GM12878 (cell line): ENCODE measurements at regions of chr2 and their contacts with region 1.

Region 1: DNA sequence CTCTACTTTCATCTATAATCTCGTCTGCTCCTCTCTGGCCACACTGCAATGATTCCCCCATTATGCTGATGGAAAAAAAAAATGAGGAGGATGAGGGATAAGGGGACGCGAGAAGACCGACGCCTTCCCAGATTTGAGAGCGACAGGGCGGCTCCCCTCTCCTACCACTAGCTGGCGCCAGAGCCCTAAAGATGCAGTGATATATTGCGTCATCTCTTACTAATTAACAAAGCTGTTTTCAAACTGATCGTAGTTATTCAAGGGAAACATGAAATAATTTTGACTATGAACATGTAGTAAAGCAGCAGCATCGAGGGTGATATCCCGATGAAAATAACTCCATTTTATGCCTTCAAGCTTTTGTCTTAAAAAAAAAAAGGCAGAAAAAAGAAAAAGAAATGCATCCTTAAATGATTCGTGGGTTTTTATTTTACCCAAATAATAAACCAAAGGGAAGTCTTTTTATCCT is 48.0 kb upstream of the HNRNPA3 start:
- DNase-seq: peak; percentile 56
- ATAC-seq: peak; percentile 64
- H3K4me3 ChIP-seq: peak overlapping the region; percentile 63
- H3K27ac ChIP-seq: peak overlapping the region; percentile 97
- H3K4me1 ChIP-seq: peaks cover 16% of the 10 kb centered on the region
- H3K27me3 ChIP-seq: no peaks in the 10 kb centered on the region
- CTCF ChIP-seq: peak; percentile 100; a peak in 5 of 6 replicates
- EP300 ChIP-seq: no peak; a peak in 1 of 4 replicates
- POLR2A ChIP-seq: no peak
- RAD21 ChIP-seq: peak; percentile 99

Region 2: DNA sequence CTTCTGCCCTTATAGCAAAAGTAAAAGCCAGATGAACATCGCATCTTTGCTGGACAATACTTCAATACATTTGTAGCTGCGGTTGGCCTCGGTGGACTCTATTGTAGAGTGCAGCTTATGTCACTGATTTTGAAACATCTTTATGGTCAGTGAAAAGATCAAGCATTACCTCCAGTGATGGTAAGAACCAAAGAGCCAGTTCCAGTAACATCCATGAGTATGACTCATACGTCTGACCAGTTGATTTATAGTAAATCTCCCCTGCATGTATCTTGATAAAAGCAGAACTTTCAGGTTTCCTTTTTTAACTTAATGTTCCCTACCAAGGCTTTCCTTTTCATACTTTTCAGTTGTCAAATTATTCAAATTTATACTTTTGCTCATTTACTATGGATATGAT is 71.2 kb before region 1 on chr2:
- CTCF ChIA-PET with region 1: no interaction called
- POLR2A ChIA-PET with region 1: no interaction called
- RAD21 ChIA-PET with region 1: no interaction called
- SMC1A ChIA-PET with region 1: no interaction called
- in situ Hi-C with region 1: no loop called
- intact Hi-C with region 1: no loop called
- DNase-seq: no peak
- ATAC-seq: no peak
- H3K4me3 ChIP-seq: no peak overlapping the region
- H3K27ac ChIP-seq: no peak overlapping the region
- H3K4me1 ChIP-seq: no peaks in the 10 kb centered on the region
- H3K27me3 ChIP-seq: no peaks in the 10 kb centered on the region
- CTCF ChIP-seq: no peak
- EP300 ChIP-seq: no peak
- POLR2A ChIP-seq: no peak
- RAD21 ChIP-seq: no peak

Region 3: GRCh38 chr2:177188482-177189469 is 24.2 kb after region 1 on chr2:
- CTCF ChIA-PET with region 1: interaction called, 128 read pairs
- POLR2A ChIA-PET with region 1: interaction called, 6 read pairs
- RAD21 ChIA-PET with region 1: interaction called, 65 read pairs
- SMC1A ChIA-PET with region 1: interaction called, 82 read pairs
- in situ Hi-C with region 1: no loop called
- intact Hi-C with region 1: no loop called
- DNase-seq: no peak
- ATAC-seq: peak; percentile 27; the same call in 1 of the 3 replicates
- H3K4me3 ChIP-seq: no peak overlapping the region
- H3K27ac ChIP-seq: no peak overlapping the region
- H3K4me1 ChIP-seq: peaks cover 7% of the 10 kb centered on the region; the same call in 1 of the 2 replicates
- H3K27me3 ChIP-seq: no peaks in the 10 kb centered on the region
- CTCF ChIP-seq: no peak
- EP300 ChIP-seq: no peak
- POLR2A ChIP-seq: no peak
- RAD21 ChIP-seq: no peak

Region 4: DNA sequence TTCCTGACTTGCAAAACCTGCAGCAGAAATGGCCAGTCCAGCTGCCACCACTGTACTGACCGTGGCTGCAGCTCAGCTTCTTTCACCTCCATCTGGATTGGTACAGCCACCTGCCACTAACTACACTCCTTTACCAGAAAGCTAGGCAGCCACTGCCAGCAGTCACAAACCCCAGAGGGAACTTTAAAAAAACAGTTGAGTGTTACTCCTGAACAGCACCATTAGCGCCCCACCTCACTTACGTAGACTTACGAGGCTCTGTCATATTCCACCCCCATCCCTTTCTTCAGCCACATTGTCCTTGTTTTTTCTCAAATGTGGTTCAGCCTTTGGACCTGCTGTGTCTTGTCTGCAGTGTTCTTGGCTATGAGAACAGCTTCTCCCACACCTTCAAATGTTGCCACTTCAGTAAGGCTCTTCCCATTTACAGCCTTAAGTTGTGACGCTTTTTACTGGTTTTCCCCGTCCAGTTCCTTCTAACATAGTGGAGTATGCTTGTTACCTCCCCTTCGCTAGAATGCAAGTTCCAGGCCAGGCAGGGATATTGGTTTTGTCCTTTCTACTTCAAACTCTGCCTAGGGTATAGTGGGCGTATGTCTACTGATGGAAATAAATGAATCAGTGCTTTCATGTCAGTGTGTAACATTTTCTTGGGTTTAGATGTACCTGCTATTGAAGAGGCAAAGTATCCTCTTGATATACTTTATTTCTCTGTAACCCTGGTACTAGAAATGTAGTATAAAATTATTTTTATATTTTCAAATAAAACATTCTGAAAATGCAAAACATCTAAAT is 65.0 kb after region 1 on chr2:
- CTCF ChIA-PET with region 1: interaction called, 11 read pairs
- POLR2A ChIA-PET with region 1: no interaction called
- RAD21 ChIA-PET with region 1: interaction called, 10 read pairs
- SMC1A ChIA-PET with region 1: interaction called, 7 read pairs
- in situ Hi-C with region 1: no loop called
- intact Hi-C with region 1: no loop called
- DNase-seq: no peak
- ATAC-seq: peak; percentile 17
- H3K4me3 ChIP-seq: no peak overlapping the region
- H3K27ac ChIP-seq: no peak overlapping the region
- H3K4me1 ChIP-seq: no peaks in the 10 kb centered on the region
- H3K27me3 ChIP-seq: no peaks in the 10 kb centered on the region
- CTCF ChIP-seq: no peak
- EP300 ChIP-seq: no peak
- POLR2A ChIP-seq: peak; percentile 61
- RAD21 ChIP-seq: no peak

Region 5: GRCh38 chr2:177281400-177282180 is 117.0 kb after region 1 on chr2:
- CTCF ChIA-PET with region 1: interaction called, 29 read pairs
- POLR2A ChIA-PET with region 1: no interaction called
- RAD21 ChIA-PET with region 1: interaction called, 42 read pairs
- SMC1A ChIA-PET with region 1: interaction called, 55 read pairs
- in situ Hi-C with region 1: no loop called
- intact Hi-C with region 1: no loop called
- DNase-seq: peak; percentile 64
- ATAC-seq: peak; percentile 76
- H3K4me3 ChIP-seq: no peak overlapping the region
- H3K27ac ChIP-seq: peak overlapping the region; percentile 78
- H3K4me1 ChIP-seq: peaks cover 20% of the 10 kb centered on the region
- H3K27me3 ChIP-seq: no peaks in the 10 kb centered on the region
- CTCF ChIP-seq: no peak
- EP300 ChIP-seq: no peak
- POLR2A ChIP-seq: no peak
- RAD21 ChIP-seq: no peak

Region 6: DNA sequence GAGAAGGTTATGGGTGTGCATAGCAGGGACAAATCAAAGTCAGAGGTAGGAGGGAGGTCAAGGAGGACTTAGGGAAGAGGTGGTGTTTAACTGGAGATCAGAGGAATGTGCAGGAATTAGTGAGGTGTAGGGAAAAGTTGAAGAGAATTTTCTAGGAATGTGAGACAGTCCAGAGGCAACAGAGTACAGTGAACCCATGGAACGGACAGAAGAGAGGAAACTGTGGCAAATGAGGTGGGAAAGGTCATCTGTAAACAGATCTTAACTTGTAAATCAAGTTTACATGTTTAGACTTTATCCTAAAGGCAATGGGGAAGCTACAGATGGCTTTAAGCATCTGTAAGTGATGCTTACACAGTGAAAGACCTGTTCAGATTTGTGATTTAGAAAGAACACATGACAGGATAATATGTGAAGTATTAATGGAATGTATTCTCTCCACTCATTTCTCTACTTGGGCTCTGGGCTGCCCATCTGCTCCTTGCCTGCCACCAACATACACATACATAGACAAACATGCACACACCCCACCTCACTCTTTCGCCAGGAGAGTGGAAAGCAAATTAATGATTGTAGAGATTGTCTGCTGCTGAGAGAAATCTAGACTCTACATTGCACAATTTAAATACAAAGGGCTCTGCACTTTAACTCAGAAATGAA is 160.8 kb after region 1 on chr2:
- CTCF ChIA-PET with region 1: interaction called, 48 read pairs
- POLR2A ChIA-PET with region 1: interaction called, 3 read pairs
- RAD21 ChIA-PET with region 1: interaction called, 36 read pairs
- SMC1A ChIA-PET with region 1: interaction called, 41 read pairs
- in situ Hi-C with region 1: loop called (anchors 5 kb)
- intact Hi-C with region 1: no loop called
- DNase-seq: no peak
- ATAC-seq: peak; percentile 69
- H3K4me3 ChIP-seq: no peak overlapping the region
- H3K27ac ChIP-seq: no peak overlapping the region
- H3K4me1 ChIP-seq: no peaks in the 10 kb centered on the region
- H3K27me3 ChIP-seq: no peaks in the 10 kb centered on the region
- CTCF ChIP-seq: no peak
- EP300 ChIP-seq: no peak
- POLR2A ChIP-seq: no peak
- RAD21 ChIP-seq: no peak

Region 7: DNA sequence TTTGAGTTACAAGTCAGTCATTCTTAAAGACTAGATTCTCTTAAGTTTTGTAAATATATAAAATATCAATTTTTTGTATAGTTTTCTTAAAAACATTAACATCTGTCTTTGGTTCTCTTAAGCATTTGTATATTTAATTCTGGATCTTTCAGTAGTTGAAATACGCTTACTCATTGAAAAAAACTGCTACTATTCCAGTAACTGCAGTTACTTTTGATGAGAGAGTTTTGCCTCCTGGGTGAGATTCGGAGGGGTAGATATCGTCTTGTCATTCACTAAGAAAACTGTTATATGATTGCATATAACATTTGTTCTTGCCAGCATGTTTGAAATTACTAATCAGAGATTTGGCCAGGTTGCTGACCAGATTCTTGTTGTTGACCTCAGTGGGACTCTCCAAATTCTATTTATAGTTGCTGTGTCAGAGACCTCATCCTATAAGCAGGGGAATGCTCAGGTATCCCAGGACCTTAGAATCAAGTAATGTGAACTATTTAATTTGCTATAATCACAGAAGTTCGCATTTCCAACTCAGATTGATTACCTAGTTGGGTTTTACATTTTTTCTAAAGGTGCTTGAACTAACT is 235.8 kb after region 1 on chr2:
- CTCF ChIA-PET with region 1: interaction called, 15 read pairs
- POLR2A ChIA-PET with region 1: interaction called, 3 read pairs
- RAD21 ChIA-PET with region 1: interaction called, 7 read pairs
- SMC1A ChIA-PET with region 1: interaction called, 5 read pairs
- in situ Hi-C with region 1: no loop called
- intact Hi-C with region 1: loop called (anchors 5 kb)
- DNase-seq: no peak
- ATAC-seq: peak; percentile 29
- H3K4me3 ChIP-seq: no peak overlapping the region
- H3K27ac ChIP-seq: no peak overlapping the region
- H3K4me1 ChIP-seq: peaks cover 9% of the 10 kb centered on the region
- H3K27me3 ChIP-seq: no peaks in the 10 kb centered on the region
- CTCF ChIP-seq: no peak
- EP300 ChIP-seq: no peak
- POLR2A ChIP-seq: no peak
- RAD21 ChIP-seq: no peak